Ovary (tissue), 10 donors: ENCODE measurements at regions of chr14 and their contacts with region 1.

Region 1: GRCh38 chr14:22829661-22830442 is at the start of gene MRPL52:
- DNase-seq: peak; percentile 85 to 92 (median 89)
- H3K4me3 ChIP-seq: peak within 1 kb of the TSS; percentile 57
- H3K27ac ChIP-seq: peak within 1 kb of the TSS in 1 of 2 donors; percentile 15
- H3K4me1 ChIP-seq: no peaks in the 10 kb centered on the region
- H3K27me3 ChIP-seq: no peaks in the 10 kb centered on the region
- CTCF ChIP-seq: no peak
- EP300 ChIP-seq: peak; percentile 24
- POLR2A ChIP-seq: no peak
- total RNA-seq, gene MRPL52: 29.0 to 78.3 (median 54.1) TPM

Region 2: DNA sequence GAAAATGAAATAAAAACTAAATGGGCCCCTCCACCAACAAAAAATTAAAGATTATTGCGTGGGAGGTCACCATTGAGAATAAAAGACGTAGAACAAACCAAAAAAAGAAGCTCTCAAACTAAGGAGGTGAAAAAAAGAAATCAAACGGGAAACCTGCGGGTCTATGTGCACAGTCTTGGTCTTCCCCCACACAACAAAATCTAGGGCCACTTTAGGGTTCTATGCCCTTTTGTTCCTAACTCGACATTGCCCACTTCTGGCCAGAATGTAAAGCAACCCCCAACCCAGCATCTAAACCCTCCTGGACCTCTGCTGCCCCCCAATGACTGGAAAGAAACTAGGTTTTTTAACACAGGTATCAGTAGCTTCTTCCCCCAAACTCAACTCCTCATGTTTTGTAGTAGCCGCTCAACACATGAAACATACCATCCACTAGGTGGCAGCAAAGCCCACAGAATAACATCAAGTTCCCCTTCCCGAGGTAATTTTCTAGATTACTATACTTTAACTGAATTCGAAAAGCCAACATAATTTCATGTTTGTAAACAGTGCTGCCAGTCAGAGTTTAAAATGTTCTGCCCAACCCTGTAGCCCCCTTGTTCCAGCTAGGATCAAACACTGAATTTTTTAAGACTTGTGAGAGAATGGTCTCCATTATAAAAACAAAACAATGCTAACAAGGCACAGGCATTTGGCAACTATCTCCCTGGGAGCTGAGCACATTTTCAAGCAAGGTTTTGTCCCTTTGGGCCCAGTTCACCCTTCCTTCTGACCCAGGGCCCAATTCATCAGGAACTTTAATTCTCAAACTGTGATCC is 259.5 kb before region 1 on chr14:
- intact Hi-C with region 1: loop called in 1 of 4 experiments (anchors 10 kb)
- DNase-seq: peak; percentile 64 to 88 (median 71)
- H3K4me3 ChIP-seq: no peak overlapping the region
- H3K27ac ChIP-seq: no peak overlapping the region
- H3K4me1 ChIP-seq: no peaks in the 10 kb centered on the region
- H3K27me3 ChIP-seq: no peaks in the 10 kb centered on the region
- CTCF ChIP-seq: peak; percentile 65 to 90 (median 88)
- EP300 ChIP-seq: no peak
- POLR2A ChIP-seq: no peak

Region 3: GRCh38 chr14:22589096-22589839 is 240.6 kb before region 1 on chr14 and contains the start of gene DAD1:
- intact Hi-C with region 1: loop called in 1 of 4 experiments (anchors 10 kb)
- DNase-seq: peak; percentile 98 to 100 (median 99)
- H3K4me3 ChIP-seq: peak within 1 kb of the TSS; percentile 88
- H3K27ac ChIP-seq: peak within 1 kb of the TSS; percentile 53 to 85
- H3K4me1 ChIP-seq: peaks cover 5% of the 10 kb centered on the region
- H3K27me3 ChIP-seq: no peaks in the 10 kb centered on the region
- CTCF ChIP-seq: peak in 2 of 3 donors; percentile 21 to 53
- EP300 ChIP-seq: peak; percentile 9
- POLR2A ChIP-seq: peak; percentile 90
- total RNA-seq, gene DAD1: 117 to 241 (median 141) TPM